Endothelial cell of umbilical vein (primary cell): ENCODE measurements at regions of chr6 and their contacts with region 1.

Region 1: GRCh38 chr6:49531774-49532569 is 18.5 kb upstream of the C6orf141 start:
- DNase-seq: peak; percentile 84
- H3K4me3 ChIP-seq: peak overlapping the region in 1 of 3 experiments; percentile 58
- H3K27ac ChIP-seq: no peak overlapping the region
- H3K4me1 ChIP-seq: peaks cover 3% of the 10 kb centered on the region
- H3K27me3 ChIP-seq: peaks cover 0 to 4% of the 10 kb centered on the region in 2 experiments
- CTCF ChIP-seq: peak; percentile 66 to 71
- POLR2A ChIP-seq: no peak

Region 2: GRCh38 chr6:49462927-49463611 is 68.9 kb before region 1 on chr6 and contains the starts of genes CENPQ and MMUT:
- CTCF ChIA-PET with region 1: no interaction called
- POLR2A ChIA-PET with region 1: no interaction called
- dilution Hi-C with region 1: no loop called
- intact Hi-C with region 1: loop called (anchors 1 kb)
- DNase-seq: peak; percentile 94
- H3K4me3 ChIP-seq: peak within 1 kb of the TSS; percentile 66 to 96 (median 92)
- H3K27ac ChIP-seq: peak within 1 kb of the TSS; percentile 68
- H3K4me1 ChIP-seq: peaks cover 19% of the 10 kb centered on the region
- H3K27me3 ChIP-seq: no peaks in the 10 kb centered on the region
- CTCF ChIP-seq: no peak
- POLR2A ChIP-seq: peak; percentile 72
- total RNA-seq, gene CENPQ: 8.0 and 8.2 TPM in 2 replicates
- total RNA-seq, gene MMUT: 15.7 and 16.2 TPM in 2 replicates

Region 3: DNA sequence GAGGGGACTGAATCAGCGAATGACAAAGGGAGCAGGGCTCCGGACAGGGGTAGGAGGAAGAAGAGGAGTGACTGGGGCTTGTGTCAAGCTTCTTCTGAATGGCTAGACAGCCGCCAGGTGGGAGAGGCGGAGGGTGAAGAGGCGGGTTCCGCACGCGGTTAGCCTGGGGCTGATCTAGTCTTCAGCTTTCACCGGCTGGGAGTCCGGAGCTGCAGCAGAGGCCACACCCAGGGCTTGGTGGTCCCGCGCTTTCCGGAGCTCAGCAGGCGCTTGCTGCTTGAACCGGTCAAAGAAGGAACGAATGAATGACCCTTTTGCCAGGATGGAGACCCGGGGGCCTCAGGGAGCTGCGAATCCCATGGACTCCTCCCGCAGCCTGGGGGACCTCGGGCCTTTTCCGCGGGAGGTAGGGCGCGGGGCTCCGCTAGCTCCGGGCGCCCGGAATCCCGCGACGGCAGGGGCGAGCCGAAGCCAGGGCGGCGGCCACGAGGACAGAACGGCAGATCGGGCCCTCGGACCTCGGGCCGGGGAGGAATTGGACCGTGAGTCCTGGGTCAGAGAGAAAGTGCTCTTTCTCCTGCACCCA is 18.6 kb after region 1 on chr6 and contains the start of gene C6orf141:
- CTCF ChIA-PET with region 1: interaction called, 80 read pairs
- POLR2A ChIA-PET with region 1: interaction called, 7 read pairs
- dilution Hi-C with region 1: no loop called
- intact Hi-C with region 1: loop called (anchors 1 kb)
- DNase-seq: peak; percentile 24
- H3K4me3 ChIP-seq: peak within 1 kb of the TSS; percentile 51 to 71 (median 59)
- H3K27ac ChIP-seq: peak within 1 kb of the TSS; percentile 11
- H3K4me1 ChIP-seq: peaks cover 24% of the 10 kb centered on the region
- H3K27me3 ChIP-seq: peaks cover 0 to 3% of the 10 kb centered on the region in 2 experiments
- CTCF ChIP-seq: no peak
- POLR2A ChIP-seq: no peak
- total RNA-seq, gene C6orf141: 13.7 and 15.5 TPM in 2 replicates

Region 4: GRCh38 chr6:49582529-49582928 is 50.6 kb after region 1 on chr6:
- CTCF ChIA-PET with region 1: interaction called, 11 read pairs
- POLR2A ChIA-PET with region 1: no interaction called
- dilution Hi-C with region 1: no loop called
- intact Hi-C with region 1: no loop called
- DNase-seq: no peak
- H3K4me3 ChIP-seq: no peak overlapping the region
- H3K27ac ChIP-seq: no peak overlapping the region
- H3K4me1 ChIP-seq: no peaks in the 10 kb centered on the region
- H3K27me3 ChIP-seq: peaks cover 0 to 2% of the 10 kb centered on the region in 2 experiments
- CTCF ChIP-seq: no peak
- POLR2A ChIP-seq: no peak

Region 5: GRCh38 chr6:49618257-49618656 is 86.3 kb after region 1 on chr6:
- CTCF ChIA-PET with region 1: interaction called, 341 read pairs
- POLR2A ChIA-PET with region 1: no interaction called
- dilution Hi-C with region 1: no loop called
- intact Hi-C with region 1: no loop called
- DNase-seq: no peak
- H3K4me3 ChIP-seq: no peak overlapping the region
- H3K27ac ChIP-seq: no peak overlapping the region
- H3K4me1 ChIP-seq: no peaks in the 10 kb centered on the region
- H3K27me3 ChIP-seq: peaks cover 0 to 4% of the 10 kb centered on the region in 2 experiments
- CTCF ChIP-seq: no peak
- POLR2A ChIP-seq: no peak

Region 6: DNA sequence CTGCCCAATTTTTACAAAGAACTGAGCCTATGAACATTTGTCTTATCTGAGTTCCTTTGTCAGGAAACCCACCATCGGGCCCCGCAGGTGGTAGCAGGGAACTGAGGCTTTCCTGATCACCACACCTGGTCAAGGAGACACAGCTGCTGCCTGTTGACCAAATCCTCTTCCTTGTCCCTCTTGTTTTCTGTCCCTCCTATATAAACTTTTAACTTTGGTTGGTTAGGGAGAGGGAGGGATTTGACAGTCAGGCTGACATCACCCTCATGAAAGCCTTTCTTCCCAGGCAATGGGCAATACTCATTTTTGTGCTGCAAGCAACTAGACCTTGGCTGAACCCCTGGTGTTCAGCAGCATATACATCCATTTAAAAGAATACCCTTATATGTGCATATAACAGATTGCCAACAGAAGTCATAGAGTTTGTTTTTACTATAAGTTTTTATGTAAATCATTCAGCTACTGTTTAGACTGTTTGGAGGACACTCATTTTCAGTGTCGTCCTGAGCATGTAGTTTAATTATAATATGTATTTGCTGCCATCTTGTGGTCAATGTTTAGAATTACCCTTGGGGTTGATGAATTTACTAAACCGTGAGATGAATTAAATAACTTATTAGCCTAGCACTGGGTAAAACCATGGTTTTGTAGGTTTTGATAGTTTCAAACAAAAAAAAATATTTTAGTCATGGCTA is 317.4 kb after region 1 on chr6:
- CTCF ChIA-PET with region 1: interaction called, 22 read pairs
- POLR2A ChIA-PET with region 1: no interaction called
- dilution Hi-C with region 1: no loop called
- intact Hi-C with region 1: loop called (anchors 1 kb)
- DNase-seq: peak; percentile 47
- H3K4me3 ChIP-seq: no peak overlapping the region
- H3K27ac ChIP-seq: no peak overlapping the region
- H3K4me1 ChIP-seq: no peaks in the 10 kb centered on the region
- H3K27me3 ChIP-seq: no peaks in the 10 kb centered on the region
- CTCF ChIP-seq: peak; percentile 9 to 19
- POLR2A ChIP-seq: no peak

Region 7: GRCh38 chr6:50198245-50198644 is 666.3 kb after region 1 on chr6:
- CTCF ChIA-PET with region 1: no interaction called
- POLR2A ChIA-PET with region 1: no interaction called
- dilution Hi-C with region 1: no loop called
- intact Hi-C with region 1: no loop called
- DNase-seq: no peak
- H3K4me3 ChIP-seq: no peak overlapping the region
- H3K27ac ChIP-seq: no peak overlapping the region
- H3K4me1 ChIP-seq: no peaks in the 10 kb centered on the region
- H3K27me3 ChIP-seq: no peaks in the 10 kb centered on the region
- CTCF ChIP-seq: no peak
- POLR2A ChIP-seq: no peak